AG04449 (cell line): ENCODE measurements at regions of chr12 and their contacts with region 1.

Region 1: GRCh38 chr12:49580572-49581535 is 12.9 kb upstream of the MCRS1 start:
- DNase-seq: peak; percentile 9
- H3K4me3 ChIP-seq: no peak overlapping the region
- CTCF ChIP-seq: peak; percentile 93

Region 2: DNA sequence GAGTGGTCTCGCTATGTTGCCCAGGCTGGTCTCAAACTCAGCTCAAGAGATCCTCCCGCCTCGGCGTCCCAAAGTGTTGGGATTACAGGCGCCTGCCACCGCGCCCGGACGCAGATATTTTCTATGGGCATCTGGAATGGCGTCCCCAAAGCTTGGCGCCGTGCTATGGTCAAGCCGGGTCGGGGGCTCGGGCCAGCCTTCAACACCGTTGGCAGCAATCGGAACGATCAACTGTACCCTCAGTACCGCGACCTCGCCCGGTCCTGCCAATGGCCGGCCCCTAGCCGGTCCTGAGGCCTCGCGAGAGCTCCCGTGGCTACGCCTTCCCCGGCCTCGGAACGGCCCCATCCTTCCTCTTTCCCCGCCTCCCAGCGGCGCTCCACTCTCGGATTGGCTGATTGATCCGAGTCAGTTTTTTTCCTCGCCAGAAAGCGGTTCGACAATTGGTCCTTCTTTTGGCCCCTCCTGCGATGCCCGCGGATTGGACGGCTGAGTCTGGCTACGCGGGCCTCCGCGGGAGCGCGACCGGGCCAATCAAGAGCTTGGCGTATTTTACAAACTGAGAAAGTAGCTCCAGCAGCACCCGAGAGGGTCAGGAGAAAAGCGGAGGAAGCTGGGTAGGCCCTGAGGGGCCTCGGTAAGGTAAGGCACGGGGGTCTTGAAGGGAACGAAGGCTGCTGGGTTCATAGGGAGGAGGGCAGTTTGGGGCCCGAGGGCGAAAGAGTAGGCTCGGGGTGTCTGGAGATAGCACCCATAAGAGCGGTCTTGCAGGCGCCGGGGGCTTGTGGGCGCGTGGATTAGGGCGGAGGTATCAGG is 257.9 kb before region 1 on chr12 and contains the start of gene TROAP:
- CTCF ChIA-PET with region 1: interaction called, 11 read pairs
- POLR2A ChIA-PET with region 1: no interaction called
- DNase-seq: peak; percentile 80
- H3K4me3 ChIP-seq: peak within 1 kb of the TSS; percentile 78
- CTCF ChIP-seq: no peak

Region 3: GRCh38 chr12:49347384-49348237 is 233.2 kb before region 1 on chr12:
- CTCF ChIA-PET with region 1: interaction called, 39 read pairs
- POLR2A ChIA-PET with region 1: no interaction called
- DNase-seq: no peak
- H3K4me3 ChIP-seq: peak overlapping the region; percentile 47
- CTCF ChIP-seq: peak; percentile 96

Region 4: GRCh38 chr12:49567611-49568441 is 13.0 kb before region 1 on chr12 and contains the start of gene MCRS1:
- CTCF ChIA-PET with region 1: interaction called, 75 read pairs
- POLR2A ChIA-PET with region 1: no interaction called
- DNase-seq: peak; percentile 50
- H3K4me3 ChIP-seq: peak within 1 kb of the TSS; percentile 100
- CTCF ChIP-seq: no peak

Region 5: GRCh38 chr12:49623142-49623904 is 42.5 kb after region 1 on chr12 and contains the start of gene PRPF40B:
- CTCF ChIA-PET with region 1: interaction called, 16 read pairs
- POLR2A ChIA-PET with region 1: no interaction called
- DNase-seq: no peak
- H3K4me3 ChIP-seq: peak within 1 kb of the TSS; percentile 65
- CTCF ChIP-seq: peak; percentile 75